ENCODE measurements at regions of chr15 and their contacts with region 1.

Region 1: DNA sequence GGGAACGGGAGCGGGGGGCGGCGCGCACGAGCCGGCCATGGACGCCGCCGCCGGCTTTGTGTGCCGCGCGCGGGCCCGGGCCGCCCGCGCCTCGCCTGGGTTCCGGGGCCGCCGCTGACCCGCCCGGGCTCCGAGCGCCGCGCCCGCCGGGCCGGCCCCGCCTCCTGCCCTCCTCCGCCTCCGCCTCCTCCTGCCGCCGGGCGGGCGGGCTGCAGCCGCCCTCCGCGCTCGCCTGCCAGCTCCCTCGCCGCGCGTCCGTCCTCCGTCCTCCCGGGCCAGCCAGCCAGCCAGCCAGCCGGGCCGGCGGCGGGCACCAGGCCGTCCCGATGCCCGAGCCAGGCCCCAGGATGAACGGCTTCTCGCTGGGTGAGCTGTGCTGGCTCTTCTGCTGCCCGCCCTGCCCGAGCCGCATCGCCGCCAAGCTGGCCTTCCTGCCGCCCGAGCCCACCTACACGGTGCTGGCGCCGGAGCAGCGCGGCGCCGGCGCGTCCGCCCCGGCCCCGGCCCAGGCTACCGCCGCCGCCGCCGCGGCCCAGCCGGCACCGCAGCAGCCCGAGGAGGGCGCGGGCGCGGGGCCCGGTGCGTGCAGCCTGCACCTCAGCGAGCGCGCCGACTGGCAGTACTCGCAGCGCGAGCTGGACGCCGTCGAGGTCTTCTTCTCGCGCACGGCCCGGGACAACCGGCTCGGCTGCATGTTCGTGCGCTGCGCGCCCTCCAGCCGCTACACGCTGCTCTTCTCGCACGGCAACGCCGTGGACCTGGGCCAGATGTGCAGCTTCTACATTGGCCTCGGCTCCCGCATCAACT is at the start of gene ABHD17C:
- DNase-seq: peak; percentile 60 to 68
- ATAC-seq: peak; percentile 73 to 84
- H3K4me3 ChIP-seq: peak within 1 kb of the TSS; percentile 79
- H3K27ac ChIP-seq: peak within 1 kb of the TSS; percentile 89 to 94
- H3K4me1 ChIP-seq: peaks cover 16% of the 10 kb centered on the region
- CTCF ChIP-seq: no peak
- EP300 ChIP-seq: no peak
- POLR2A ChIP-seq: peak; percentile 71
- RAD21 ChIP-seq: no peak
- polyA plus RNA-seq, gene ABHD17C: 23.7 and 24.9 TPM in 2 replicates

Region 2: GRCh38 chr15:80660122-80660521 is 35.2 kb before region 1 on chr15:
- CTCF ChIA-PET with region 1: interaction called, 12 read pairs
- POLR2A ChIA-PET with region 1: no interaction called
- DNase-seq: peak; percentile 55 to 63
- ATAC-seq: peak; percentile 98 to 100
- H3K4me3 ChIP-seq: no peak overlapping the region
- H3K27ac ChIP-seq: no peak overlapping the region
- H3K4me1 ChIP-seq: no peaks in the 10 kb centered on the region
- CTCF ChIP-seq: peak; percentile 53
- EP300 ChIP-seq: no peak
- POLR2A ChIP-seq: no peak
- RAD21 ChIP-seq: peak; percentile 60 to 73

Region 3: GRCh38 chr15:80710635-80711554 is 15.6 kb after region 1 on chr15:
- CTCF ChIA-PET with region 1: interaction called, 14 read pairs
- POLR2A ChIA-PET with region 1: interaction called, 5 read pairs
- DNase-seq: no peak
- ATAC-seq: peak in 1 of 2 experiments; percentile 38; a peak in 1 of 6 replicates
- H3K4me3 ChIP-seq: no peak overlapping the region
- H3K27ac ChIP-seq: no peak overlapping the region
- H3K4me1 ChIP-seq: no peaks in the 10 kb centered on the region
- CTCF ChIP-seq: no peak
- EP300 ChIP-seq: no peak
- POLR2A ChIP-seq: no peak
- RAD21 ChIP-seq: no peak

Region 4: DNA sequence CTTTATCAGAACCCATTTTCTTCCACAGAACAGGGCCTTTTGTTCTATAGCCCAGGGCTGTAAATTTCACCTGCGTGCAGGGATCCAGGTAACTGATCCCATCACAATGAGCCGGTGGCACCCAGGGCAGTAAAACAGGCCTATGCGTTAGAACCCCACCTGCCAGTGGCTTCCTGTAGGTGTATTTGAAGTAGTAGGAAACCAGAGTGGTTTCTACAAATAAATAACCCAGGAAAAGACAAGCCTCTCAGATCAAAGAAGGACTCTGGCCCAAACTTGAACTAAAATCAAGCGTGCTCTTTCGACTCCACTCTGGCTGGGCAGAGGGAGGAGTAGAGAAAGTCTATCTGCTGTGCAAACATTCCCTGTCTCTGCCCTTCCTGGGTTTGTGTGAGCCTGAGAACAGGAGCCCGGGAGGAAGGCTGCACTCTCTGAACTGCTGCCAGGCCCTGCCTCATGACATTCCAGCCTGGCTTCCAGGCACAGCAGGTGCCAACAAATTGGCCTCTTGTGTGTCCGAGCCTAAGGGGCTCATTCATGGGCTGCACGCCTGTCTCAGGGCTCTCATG is 161.6 kb after region 1 on chr15:
- CTCF ChIA-PET with region 1: no interaction called
- POLR2A ChIA-PET with region 1: no interaction called
- DNase-seq: peak; percentile 51 to 60
- ATAC-seq: peak; percentile 55 to 83
- H3K4me3 ChIP-seq: no peak overlapping the region
- H3K27ac ChIP-seq: peak overlapping the region; percentile 57 to 69
- H3K4me1 ChIP-seq: peaks cover 30% of the 10 kb centered on the region
- CTCF ChIP-seq: no peak; the same call in 2 of the 3 replicates
- EP300 ChIP-seq: 0 out of 5 replicates have a peak, but pooled peaks of 1 of the 2 experiments have one; percentile 28
- POLR2A ChIP-seq: no peak
- RAD21 ChIP-seq: no peak; a peak in 1 of 5 replicates

Measured in A549 (cell line).